ENCODE measurements at regions of chr1 and their contacts with region 1.

Region 1: GRCh38 chr1:175154629-175155472 is 37.7 kb downstream of the KIAA0040 start:
- DNase-seq: peak; percentile 45 to 65
- ATAC-seq: peak; percentile 69 to 70
- H3K4me3 ChIP-seq: no peak overlapping the region
- H3K27ac ChIP-seq: peak overlapping the region in 2 of 4 donors; percentile 39 to 51
- H3K4me1 ChIP-seq: peaks cover 4 to 9% of the 10 kb centered on the region in 2 donors
- H3K27me3 ChIP-seq: no peaks in the 10 kb centered on the region
- CTCF ChIP-seq: peak; percentile 67 to 87 (median 83)
- POLR2A ChIP-seq: no peak

Region 2: GRCh38 chr1:175169305-175170018 is 14.6 kb after region 1 on chr1:
- in situ Hi-C with region 1: no loop called
- intact Hi-C with region 1: no loop called
- DNase-seq: no peak
- ATAC-seq: no peak
- H3K4me3 ChIP-seq: no peak overlapping the region
- H3K27ac ChIP-seq: no peak overlapping the region
- H3K4me1 ChIP-seq: no peaks in the 10 kb centered on the region
- H3K27me3 ChIP-seq: no peaks in the 10 kb centered on the region
- CTCF ChIP-seq: no peak
- POLR2A ChIP-seq: no peak

Region 3: GRCh38 chr1:175192630-175193526 is 38.0 kb after region 1 on chr1 and contains the start of gene KIAA0040:
- in situ Hi-C with region 1: no loop called
- intact Hi-C with region 1: loop called (anchors 2 kb)
- DNase-seq: peak; percentile 53 to 69
- ATAC-seq: peak; percentile 75 to 83
- H3K4me3 ChIP-seq: peak within 1 kb of the TSS; percentile 76 to 90 (median 78)
- H3K27ac ChIP-seq: peak within 1 kb of the TSS; percentile 86 to 95 (median 91)
- H3K4me1 ChIP-seq: peaks cover 10 to 43% of the 10 kb centered on the region in 2 donors
- H3K27me3 ChIP-seq: no peaks in the 10 kb centered on the region
- CTCF ChIP-seq: no peak
- POLR2A ChIP-seq: peak; percentile 10 to 29
- total RNA-seq, gene KIAA0040: 17.5 to 33.1 (median 19.5) TPM

Region 4: GRCh38 chr1:175221666-175222175 is 66.9 kb after region 1 on chr1:
- in situ Hi-C with region 1: no loop called
- intact Hi-C with region 1: loop called (anchors 2 kb)
- DNase-seq: no peak
- ATAC-seq: peak in 1 of 2 donors; percentile 34
- H3K4me3 ChIP-seq: no peak overlapping the region
- H3K27ac ChIP-seq: peak overlapping the region in 2 of 4 donors; percentile 6 to 58
- H3K4me1 ChIP-seq: peaks cover 6 to 38% of the 10 kb centered on the region in 2 donors
- H3K27me3 ChIP-seq: no peaks in the 10 kb centered on the region
- CTCF ChIP-seq: peak in 1 of 5 experiments; percentile 33
- POLR2A ChIP-seq: no peak

Region 5: GRCh38 chr1:175307160-175307559 is 152.3 kb after region 1 on chr1:
- in situ Hi-C with region 1: no loop called
- intact Hi-C with region 1: no loop called
- DNase-seq: no peak
- ATAC-seq: no peak
- H3K4me3 ChIP-seq: no peak overlapping the region
- H3K27ac ChIP-seq: no peak overlapping the region
- H3K4me1 ChIP-seq: no peaks in the 10 kb centered on the region
- H3K27me3 ChIP-seq: no peaks in the 10 kb centered on the region
- CTCF ChIP-seq: no peak
- POLR2A ChIP-seq: no peak

Region 6: DNA sequence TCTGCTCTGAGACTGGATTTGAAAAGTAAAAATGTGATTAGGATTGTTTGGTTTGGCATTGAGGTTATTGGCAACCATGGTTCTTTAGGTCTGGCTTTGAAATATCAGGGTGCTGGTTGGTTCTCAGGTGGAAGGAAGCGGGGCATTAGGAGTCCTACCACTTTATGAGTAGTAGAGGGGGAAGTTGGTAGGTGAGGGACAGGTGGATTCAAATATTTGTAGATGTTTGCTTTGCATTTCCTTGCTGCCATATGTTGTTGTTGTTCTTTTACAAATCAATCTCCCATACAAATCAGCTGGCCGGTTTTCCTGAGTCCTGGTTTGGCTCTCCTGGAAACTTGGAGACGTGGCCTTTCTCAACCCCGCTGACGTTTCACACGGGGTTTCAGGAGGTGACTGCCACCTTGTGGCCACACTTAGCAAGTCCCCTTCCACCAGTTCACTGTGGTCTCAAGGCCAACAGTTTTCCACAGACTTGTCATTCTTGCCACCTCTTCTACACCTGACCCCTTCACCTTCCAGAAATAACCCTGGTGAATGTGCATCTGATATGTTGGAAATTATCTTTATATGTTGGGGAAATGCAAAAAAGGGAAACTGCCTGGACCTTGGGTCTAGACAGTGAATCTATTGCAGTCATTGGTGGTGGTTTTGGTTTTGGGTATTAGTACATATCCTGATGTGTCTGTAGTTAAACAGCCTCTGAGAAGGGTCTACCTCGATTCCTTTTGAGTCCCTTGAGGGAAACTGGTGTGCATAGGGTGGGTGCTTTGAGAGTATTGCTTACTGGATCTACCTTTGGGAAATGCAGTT is 164.8 kb after region 1 on chr1:
- in situ Hi-C with region 1: loop called in 3 of 4 experiments (anchors 5 kb)
- intact Hi-C with region 1: loop called (anchors 1 kb)
- DNase-seq: peak; percentile 69 to 71
- ATAC-seq: peak; percentile 86 to 89
- H3K4me3 ChIP-seq: no peak overlapping the region
- H3K27ac ChIP-seq: peak overlapping the region; percentile 21 to 74 (median 49)
- H3K4me1 ChIP-seq: peaks cover 6 to 16% of the 10 kb centered on the region in 2 donors
- H3K27me3 ChIP-seq: no peaks in the 10 kb centered on the region
- CTCF ChIP-seq: peak; percentile 86 to 90 (median 88)
- POLR2A ChIP-seq: no peak

Region 7: GRCh38 chr1:176073524-176074157 is 918.8 kb after region 1 on chr1:
- in situ Hi-C with region 1: loop called in 2 of 4 experiments (anchors 25 kb)
- intact Hi-C with region 1: loop called (anchors 5 kb)
- DNase-seq: no peak
- ATAC-seq: no peak
- H3K4me3 ChIP-seq: no peak overlapping the region
- H3K27ac ChIP-seq: no peak overlapping the region
- H3K4me1 ChIP-seq: no peaks in the 10 kb centered on the region
- H3K27me3 ChIP-seq: no peaks in the 10 kb centered on the region
- CTCF ChIP-seq: peak; percentile 23 to 69 (median 45)
- POLR2A ChIP-seq: no peak

Region 8: DNA sequence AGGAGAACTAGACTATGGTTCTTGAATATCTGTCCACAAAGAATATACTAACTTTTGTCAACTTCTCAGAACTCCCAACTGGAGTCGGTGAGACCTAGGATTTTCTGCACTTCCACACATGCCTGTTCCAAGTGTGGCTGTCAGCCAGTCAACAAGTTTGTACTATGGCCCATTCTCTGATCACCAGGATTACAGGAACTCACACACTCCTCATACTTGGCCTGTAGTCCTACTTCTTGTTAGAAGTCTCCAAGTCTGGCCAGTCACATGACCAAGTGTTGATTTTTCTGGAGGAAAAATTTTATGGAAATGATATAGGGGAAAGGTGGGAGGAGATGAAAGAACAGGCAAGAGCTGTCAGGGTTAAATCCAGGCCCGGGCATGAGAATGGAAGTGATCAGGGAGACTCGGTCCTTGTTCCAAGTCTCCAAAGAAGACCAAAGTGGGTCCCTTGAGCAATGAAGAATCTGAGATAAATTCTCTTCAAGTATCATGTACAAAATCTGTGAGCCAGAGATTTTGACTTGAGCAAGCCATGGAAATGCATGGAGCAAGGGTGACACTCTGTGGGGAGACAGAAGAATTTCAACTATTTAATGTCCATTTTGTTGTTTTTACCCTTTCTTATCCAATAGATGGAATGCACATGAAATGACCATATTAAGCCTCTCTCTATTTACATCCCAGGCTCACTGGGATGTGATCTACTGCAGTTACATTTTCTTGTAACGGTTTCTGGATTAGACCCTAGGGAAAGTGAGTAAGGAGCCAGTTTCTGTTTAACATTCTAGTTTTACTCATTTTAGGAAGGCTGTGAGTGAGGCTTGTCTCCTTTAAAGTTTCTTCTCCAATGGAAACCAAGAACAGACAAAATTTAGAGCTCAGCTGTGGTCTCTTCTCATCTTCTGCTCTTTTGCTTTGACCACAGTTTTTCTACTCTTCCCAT is 1688.8 kb after region 1 on chr1:
- in situ Hi-C with region 1: no loop called
- intact Hi-C with region 1: loop called (anchors 10 kb)
- DNase-seq: no peak
- ATAC-seq: peak; percentile 56 to 57
- H3K4me3 ChIP-seq: no peak overlapping the region
- H3K27ac ChIP-seq: no peak overlapping the region
- H3K4me1 ChIP-seq: no peaks in the 10 kb centered on the region
- H3K27me3 ChIP-seq: no peaks in the 10 kb centered on the region
- CTCF ChIP-seq: peak; percentile 58 to 77 (median 67)
- POLR2A ChIP-seq: no peak